Panc1 (cell line): ENCODE measurements at regions of chr3 and their contacts with region 1.

Region 1: GRCh38 chr3:42229942-42230688 is 35.9 kb downstream of the CCK start:
- DNase-seq: no peak
- ATAC-seq: peak; percentile 82
- H3K4me3 ChIP-seq: peak overlapping the region in 1 of 2 experiments; percentile 20; a peak in 1 of 4 replicates
- H3K27ac ChIP-seq: no peak overlapping the region
- H3K4me1 ChIP-seq: no peaks in the 10 kb centered on the region
- H3K27me3 ChIP-seq: no peaks in the 10 kb centered on the region
- CTCF ChIP-seq: peak; percentile 71

Region 2: GRCh38 chr3:42443819-42444436 is 213.8 kb after region 1 on chr3:
- CTCF ChIA-PET with region 1: interaction called, 13 read pairs
- POLR2A ChIA-PET with region 1: no interaction called
- in situ Hi-C with region 1: no loop called
- intact Hi-C with region 1: loop called (anchors 1 kb)
- DNase-seq: peak; percentile 52
- ATAC-seq: peak; percentile 99
- H3K4me3 ChIP-seq: no peak overlapping the region
- H3K27ac ChIP-seq: no peak overlapping the region
- H3K4me1 ChIP-seq: no peaks in the 10 kb centered on the region
- H3K27me3 ChIP-seq: no peaks in the 10 kb centered on the region
- CTCF ChIP-seq: peak; percentile 92

Region 3: DNA sequence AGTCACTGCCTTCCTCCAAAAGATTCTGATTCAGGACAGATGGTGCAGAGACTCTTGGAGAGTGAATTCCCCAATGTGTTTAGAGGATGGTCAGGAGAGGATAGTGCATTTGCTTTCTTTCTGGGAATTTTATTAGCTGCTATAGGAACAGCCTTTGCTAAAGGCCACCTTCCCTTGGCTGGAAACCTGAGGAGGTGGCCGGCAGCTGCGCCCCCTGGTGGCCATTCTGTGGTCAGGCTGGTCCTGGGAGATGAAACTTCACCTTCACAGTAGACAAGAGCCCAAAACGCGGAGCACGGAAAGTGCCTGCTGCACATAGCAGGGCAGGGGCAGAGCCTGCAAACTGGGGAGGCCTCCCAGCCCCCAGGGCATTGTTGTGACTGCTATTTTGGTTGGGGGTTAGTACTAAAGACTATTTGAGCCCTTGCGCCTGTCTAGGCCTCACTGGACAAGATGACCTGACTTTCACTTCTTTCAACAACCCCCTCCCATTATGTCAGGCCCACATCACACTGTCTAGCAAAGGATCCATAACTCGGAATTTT is 317.4 kb after region 1 on chr3:
- CTCF ChIA-PET with region 1: interaction called, 3 read pairs
- POLR2A ChIA-PET with region 1: no interaction called
- in situ Hi-C with region 1: no loop called
- intact Hi-C with region 1: loop called (anchors 5 kb)
- DNase-seq: peak; percentile 36
- ATAC-seq: peak; percentile 86
- H3K4me3 ChIP-seq: no peak overlapping the region
- H3K27ac ChIP-seq: no peak overlapping the region
- H3K4me1 ChIP-seq: no peaks in the 10 kb centered on the region; the same call in 1 of the 2 replicates
- H3K27me3 ChIP-seq: no peaks in the 10 kb centered on the region
- CTCF ChIP-seq: peak; percentile 93

Region 4: GRCh38 chr3:42780892-42781700 is 551.0 kb after region 1 on chr3:
- CTCF ChIA-PET with region 1: no interaction called
- POLR2A ChIA-PET with region 1: no interaction called
- in situ Hi-C with region 1: no loop called
- intact Hi-C with region 1: no loop called
- DNase-seq: no peak
- ATAC-seq: peak; percentile 84
- H3K4me3 ChIP-seq: no peak overlapping the region
- H3K27ac ChIP-seq: no peak overlapping the region
- H3K4me1 ChIP-seq: no peaks in the 10 kb centered on the region
- H3K27me3 ChIP-seq: no peaks in the 10 kb centered on the region
- CTCF ChIP-seq: peak; percentile 69

Region 5: DNA sequence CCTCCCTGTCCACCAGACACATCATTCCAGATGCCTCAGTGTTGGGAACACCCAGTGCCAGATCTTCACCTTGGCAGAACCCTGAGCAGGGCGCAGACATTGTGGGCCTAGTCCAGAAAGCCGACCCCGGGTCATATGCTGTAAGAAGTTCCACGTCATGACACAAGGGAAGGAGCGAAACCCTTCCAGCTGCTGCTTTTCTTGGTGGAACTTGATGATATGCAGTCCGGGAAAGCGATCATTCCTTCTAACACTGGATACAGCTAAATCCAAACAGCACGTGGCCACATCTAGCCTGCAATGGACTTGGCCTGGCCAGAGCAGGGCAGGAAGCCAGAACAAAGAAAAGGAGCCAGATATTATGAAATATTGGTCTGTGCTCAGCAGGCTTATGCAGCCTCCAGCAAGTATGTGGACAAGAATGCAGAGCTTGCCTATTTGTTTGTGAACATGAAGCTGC is 771.0 kb after region 1 on chr3:
- CTCF ChIA-PET with region 1: no interaction called
- POLR2A ChIA-PET with region 1: no interaction called
- in situ Hi-C with region 1: no loop called
- intact Hi-C with region 1: no loop called
- DNase-seq: no peak
- ATAC-seq: no peak
- H3K4me3 ChIP-seq: no peak overlapping the region
- H3K27ac ChIP-seq: no peak overlapping the region
- H3K4me1 ChIP-seq: no peaks in the 10 kb centered on the region
- H3K27me3 ChIP-seq: no peaks in the 10 kb centered on the region; the same call in 1 of the 2 replicates
- CTCF ChIP-seq: no peak